Activated CD8-positive, alpha-beta memory T cell treated with anti-CD3 and anti-CD28 coated beads, Interleukin-2, amount 10 ng/mL, durations not matched to agents 7 days and 5 days (primary cell): ENCODE measurements at regions of chr2 and their contacts with region 1.

Region 1: GRCh38 chr2:19955544-19956422 is 34.1 kb downstream of the WDR35 start:
- DNase-seq: peak; percentile 65
- ATAC-seq: peak; percentile 83
- H3K4me3 Mint-ChIP-seq: no peak overlapping the region
- H3K27ac Mint-ChIP-seq: no peak overlapping the region
- H3K4me1 Mint-ChIP-seq: no peaks in the 10 kb centered on the region
- H3K27me3 Mint-ChIP-seq: no peaks in the 10 kb centered on the region

Region 2: DNA sequence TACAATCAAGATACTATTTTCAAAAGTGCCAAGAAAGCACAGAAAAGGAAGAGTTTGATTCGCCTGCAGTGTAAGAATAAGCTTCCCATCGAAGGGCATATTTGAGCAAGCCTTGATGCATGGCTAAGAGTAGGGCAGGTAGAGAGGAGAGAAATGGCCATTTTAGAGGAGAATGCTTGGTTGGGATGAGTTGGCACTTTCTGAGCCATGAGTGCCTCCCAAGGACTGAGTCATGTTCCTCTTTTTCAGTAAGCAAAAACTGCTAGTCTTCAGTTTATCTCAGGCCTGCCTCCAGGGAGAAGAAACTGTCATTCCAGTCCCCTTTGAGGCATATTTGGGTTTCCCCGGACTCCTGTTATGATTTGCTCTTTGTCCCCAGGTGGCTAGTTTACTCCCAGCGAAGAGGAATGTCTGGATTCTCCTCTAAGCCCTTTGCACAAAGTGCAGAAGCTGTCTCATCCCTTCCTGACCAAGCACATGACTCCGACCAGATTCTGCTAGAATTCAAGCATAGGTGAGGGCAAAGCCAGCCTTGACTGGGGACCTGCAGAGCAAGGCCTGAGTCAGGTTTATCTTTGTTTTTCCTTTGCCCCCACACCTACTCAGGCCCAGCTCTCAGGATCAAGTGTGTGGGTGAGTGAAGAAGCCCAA is 169.2 kb before region 1 on chr2:
- CTCF ChIA-PET with region 1: no interaction called
- DNase-seq: no peak
- ATAC-seq: no peak
- H3K4me3 Mint-ChIP-seq: no peak overlapping the region
- H3K27ac Mint-ChIP-seq: no peak overlapping the region
- H3K4me1 Mint-ChIP-seq: no peaks in the 10 kb centered on the region
- H3K27me3 Mint-ChIP-seq: no peaks in the 10 kb centered on the region

Region 3: DNA sequence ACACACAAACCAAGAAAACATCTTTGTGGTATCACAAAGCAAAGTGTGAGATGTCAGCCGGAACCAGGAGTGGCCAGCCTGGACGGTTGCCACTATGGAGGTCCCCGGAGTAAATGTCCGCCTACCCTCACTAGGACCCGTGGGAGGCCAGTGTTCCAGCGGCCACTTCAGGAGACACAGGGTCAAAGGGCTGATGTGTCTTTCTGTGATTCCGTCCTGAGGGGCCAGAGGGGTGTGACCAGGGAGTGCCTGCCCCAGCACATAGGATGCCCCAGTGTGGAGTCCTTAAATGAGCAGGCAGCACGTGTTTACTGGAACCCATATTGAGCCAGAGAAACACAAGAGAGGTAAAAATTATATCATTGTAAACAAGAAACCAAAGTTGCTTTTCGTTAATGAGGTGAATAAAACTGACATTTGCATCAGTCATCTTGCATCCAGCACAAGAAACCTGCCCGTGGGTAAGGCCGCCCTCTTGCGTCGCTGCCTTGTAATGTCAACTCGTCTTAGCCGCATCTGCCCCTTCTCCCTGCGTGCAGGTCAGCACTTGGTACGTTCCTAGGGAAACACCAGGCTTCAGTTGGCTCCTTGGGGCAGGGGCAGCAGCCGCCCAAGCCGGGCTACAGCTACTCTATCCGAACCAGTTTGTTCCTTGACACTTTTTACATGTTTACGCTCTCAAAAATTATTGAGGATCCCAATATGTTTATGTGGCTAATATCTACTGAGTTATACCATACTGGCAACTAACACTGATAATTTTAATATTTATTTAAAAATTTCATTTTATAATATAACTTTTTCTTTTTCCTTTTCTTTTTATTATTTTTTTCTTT is 142.3 kb after region 1 on chr2:
- CTCF ChIA-PET with region 1: interaction called, 11 read pairs
- DNase-seq: peak; percentile 86
- ATAC-seq: peak; percentile 92
- H3K4me3 Mint-ChIP-seq: no peak overlapping the region
- H3K27ac Mint-ChIP-seq: no peak overlapping the region
- H3K4me1 Mint-ChIP-seq: peaks cover 1% of the 10 kb centered on the region
- H3K27me3 Mint-ChIP-seq: peaks cover 20% of the 10 kb centered on the region

Region 4: GRCh38 chr2:20186078-20186854 is 230.5 kb after region 1 on chr2:
- CTCF ChIA-PET with region 1: no interaction called
- DNase-seq: no peak
- ATAC-seq: no peak
- H3K4me3 Mint-ChIP-seq: no peak overlapping the region
- H3K27ac Mint-ChIP-seq: no peak overlapping the region
- H3K4me1 Mint-ChIP-seq: no peaks in the 10 kb centered on the region
- H3K27me3 Mint-ChIP-seq: peaks cover 3% of the 10 kb centered on the region